HepG2 (cell line): ENCODE measurements at regions of chr14 and their contacts with region 1.

Region 1: DNA sequence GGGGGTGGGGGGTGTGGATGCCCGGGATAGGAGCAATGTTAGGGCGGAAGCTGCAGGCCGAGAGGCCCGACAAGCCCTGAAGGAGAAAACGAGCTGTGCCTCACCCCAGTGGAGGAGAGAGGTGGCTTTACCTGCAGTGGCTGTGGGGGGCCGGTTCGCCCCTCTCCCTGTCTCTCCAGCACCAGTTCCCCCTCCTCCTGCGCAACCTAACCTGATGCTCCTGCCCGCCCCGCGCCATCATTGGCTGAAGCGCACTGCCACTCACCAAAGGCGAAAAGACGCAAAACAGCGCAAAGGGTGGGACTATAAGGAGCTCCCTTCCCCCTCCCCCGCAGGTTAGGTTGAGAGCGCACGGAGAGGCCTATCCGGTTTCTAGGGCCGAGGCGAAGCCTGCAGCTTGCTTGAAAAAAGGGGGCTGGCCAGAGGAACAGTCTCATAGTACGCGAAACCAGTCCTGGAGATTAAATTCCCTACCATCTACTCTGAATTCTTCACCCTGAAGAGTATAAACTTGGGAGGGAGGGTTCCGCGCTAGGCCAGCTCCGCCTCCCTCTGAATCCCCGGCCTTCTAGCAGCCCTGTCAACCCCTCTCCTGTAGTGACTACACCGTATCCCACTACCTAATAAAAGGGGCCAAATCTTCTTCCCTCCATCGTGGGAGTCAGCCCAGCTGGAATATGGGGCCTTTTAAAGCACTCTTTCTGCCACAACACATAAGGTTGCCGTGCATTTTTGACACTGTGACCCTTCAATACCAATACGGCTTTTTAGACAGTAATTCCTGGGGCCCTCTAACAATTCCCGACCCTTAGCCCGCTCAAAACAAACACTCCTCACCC is 18.6 kb downstream of the CHD8 start:
- DNase-seq: peak; percentile 100
- ATAC-seq: peak; percentile 97
- H3K4me3 ChIP-seq: peak overlapping the region; percentile 85 to 96 (median 87)
- H3K27ac ChIP-seq: peak overlapping the region; percentile 92
- H3K4me1 ChIP-seq: peaks cover 46% of the 10 kb centered on the region
- H3K27me3 ChIP-seq: peaks cover 0 to 4% of the 10 kb centered on the region in 2 experiments; a peak in 1 of 5 replicates
- CTCF ChIP-seq: no peak; the same call in 1 of the 2 replicates
- EP300 ChIP-seq: 0 out of 4 replicates have a peak, but pooled peaks of 1 of the 2 experiments have one; percentile 30
- POLR2A ChIP-seq: peak; percentile 71 to 79
- RAD21 ChIP-seq: peak; percentile 61

Region 2: GRCh38 chr14:21121106-21121505 is 316.2 kb before region 1 on chr14:
- CTCF ChIA-PET with region 1: no interaction called
- POLR2A ChIA-PET with region 1: no interaction called
- in situ Hi-C with region 1: no loop called
- intact Hi-C with region 1: no loop called
- DNase-seq: no peak
- ATAC-seq: no peak
- H3K4me3 ChIP-seq: no peak overlapping the region
- H3K27ac ChIP-seq: no peak overlapping the region
- H3K4me1 ChIP-seq: peaks cover 12% of the 10 kb centered on the region; the same call in 1 of the 2 replicates
- H3K27me3 ChIP-seq: no peaks in the 10 kb centered on the region
- CTCF ChIP-seq: no peak
- EP300 ChIP-seq: no peak
- POLR2A ChIP-seq: no peak
- RAD21 ChIP-seq: no peak

Region 3: GRCh38 chr14:21300892-21301291 is 136.4 kb before region 1 on chr14:
- CTCF ChIA-PET with region 1: no interaction called
- POLR2A ChIA-PET with region 1: no interaction called
- in situ Hi-C with region 1: no loop called
- intact Hi-C with region 1: no loop called
- DNase-seq: no peak
- ATAC-seq: peak; percentile 52
- H3K4me3 ChIP-seq: peak overlapping the region; percentile 42 to 68 (median 46)
- H3K27ac ChIP-seq: no peak overlapping the region
- H3K4me1 ChIP-seq: peaks cover 52% of the 10 kb centered on the region
- H3K27me3 ChIP-seq: no peaks in the 10 kb centered on the region
- CTCF ChIP-seq: peak; percentile 64
- EP300 ChIP-seq: no peak
- POLR2A ChIP-seq: no peak
- RAD21 ChIP-seq: 0 out of 2 replicates have a peak, but pooled peaks have one; percentile 41

Region 4: DNA sequence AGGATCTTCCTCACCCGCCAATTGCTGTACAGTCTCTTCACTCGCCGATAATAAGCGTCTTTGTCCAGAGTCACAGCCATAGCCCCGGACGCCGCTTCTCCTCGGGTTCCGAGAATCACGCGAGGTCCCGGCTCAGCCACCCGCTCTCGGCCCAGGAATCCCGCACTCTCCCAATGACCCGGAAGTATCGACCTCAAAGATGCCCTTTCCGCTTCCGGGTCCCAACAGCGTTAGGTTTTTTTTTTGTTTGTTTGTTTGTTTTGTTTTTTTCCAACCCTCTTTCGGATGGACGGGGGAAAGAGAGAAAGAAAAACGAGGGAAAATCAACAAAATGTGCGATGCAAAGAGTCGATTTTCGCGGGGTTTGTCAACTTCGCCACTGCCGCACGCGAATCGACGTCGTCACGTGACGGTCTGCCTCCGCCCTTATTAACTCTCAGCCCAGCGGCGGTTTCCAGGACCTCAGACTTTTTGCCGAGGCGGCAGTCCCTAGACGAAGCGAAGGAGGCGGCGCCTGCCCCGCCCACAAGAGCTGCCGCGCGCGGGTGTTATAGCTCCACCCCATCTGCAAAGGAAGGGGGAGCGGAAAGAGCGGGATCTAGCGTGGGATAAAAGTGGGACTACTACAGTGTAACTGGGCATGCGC is 53.3 kb before region 1 on chr14 and contains the start of gene SUPT16H:
- CTCF ChIA-PET with region 1: no interaction called
- POLR2A ChIA-PET with region 1: interaction called, 20 read pairs
- in situ Hi-C with region 1: no loop called
- intact Hi-C with region 1: loop called (anchors 2 kb)
- DNase-seq: peak; percentile 94
- ATAC-seq: peak; percentile 91
- H3K4me3 ChIP-seq: peak within 1 kb of the TSS; percentile 74 to 97 (median 90)
- H3K27ac ChIP-seq: peak within 1 kb of the TSS; percentile 92
- H3K4me1 ChIP-seq: peaks cover 43% of the 10 kb centered on the region
- H3K27me3 ChIP-seq: no peaks in the 10 kb centered on the region; a peak in 1 of 5 replicates
- CTCF ChIP-seq: peak; percentile 11; the same call in 1 of the 2 replicates
- EP300 ChIP-seq: peak in 1 of 2 experiments; percentile 25; a peak in 2 of 4 replicates
- POLR2A ChIP-seq: peak; percentile 80 to 92
- RAD21 ChIP-seq: peak; percentile 46; the same call in 1 of the 2 replicates
- total RNA-seq, gene SUPT16H: 230 and 340 TPM in 2 replicates

Region 5: DNA sequence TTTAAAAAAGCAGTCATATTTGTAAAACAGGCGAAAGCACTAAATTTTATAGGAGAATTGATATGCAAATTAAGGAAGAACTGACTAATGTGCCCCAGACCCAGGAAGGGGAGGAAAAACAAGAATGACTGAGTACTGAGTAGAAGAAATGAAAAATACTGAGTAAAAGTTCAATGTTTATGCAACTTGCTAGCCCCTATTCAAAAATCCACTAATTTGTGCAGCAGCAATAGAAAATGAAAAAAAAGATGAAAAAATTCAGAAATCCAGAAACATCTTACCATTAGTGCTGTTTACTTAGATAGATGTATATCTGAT is 12.6 kb after region 1 on chr14:
- CTCF ChIA-PET with region 1: no interaction called
- POLR2A ChIA-PET with region 1: interaction called, 211 read pairs
- in situ Hi-C with region 1: no loop called
- intact Hi-C with region 1: no loop called
- DNase-seq: no peak
- ATAC-seq: no peak
- H3K4me3 ChIP-seq: no peak overlapping the region
- H3K27ac ChIP-seq: no peak overlapping the region
- H3K4me1 ChIP-seq: peaks cover 51% of the 10 kb centered on the region
- H3K27me3 ChIP-seq: no peaks in the 10 kb centered on the region
- CTCF ChIP-seq: no peak
- EP300 ChIP-seq: no peak
- POLR2A ChIP-seq: no peak
- RAD21 ChIP-seq: no peak

Region 6: GRCh38 chr14:21510735-21511657 is 73.7 kb after region 1 on chr14 and contains the start of gene METTL3:
- CTCF ChIA-PET with region 1: no interaction called
- POLR2A ChIA-PET with region 1: interaction called, 23 read pairs
- in situ Hi-C with region 1: no loop called
- intact Hi-C with region 1: no loop called
- DNase-seq: peak; percentile 100
- ATAC-seq: peak; percentile 97
- H3K4me3 ChIP-seq: peak within 1 kb of the TSS; percentile 84 to 97 (median 87)
- H3K27ac ChIP-seq: peak within 1 kb of the TSS; percentile 80
- H3K4me1 ChIP-seq: peaks cover 53% of the 10 kb centered on the region
- H3K27me3 ChIP-seq: no peaks in the 10 kb centered on the region; a peak in 1 of 5 replicates
- CTCF ChIP-seq: peak; percentile 53
- EP300 ChIP-seq: 0 out of 4 replicates have a peak, but pooled peaks of 1 of the 2 experiments have one; percentile 1
- POLR2A ChIP-seq: peak; percentile 97
- RAD21 ChIP-seq: peak; percentile 10; the same call in 1 of the 2 replicates
- total RNA-seq, gene METTL3: 114 and 123 TPM in 2 replicates

Region 7: GRCh38 chr14:21575661-21576060 is 138.4 kb after region 1 on chr14:
- CTCF ChIA-PET with region 1: no interaction called
- POLR2A ChIA-PET with region 1: no interaction called
- in situ Hi-C with region 1: no loop called
- intact Hi-C with region 1: no loop called
- DNase-seq: no peak
- ATAC-seq: no peak; the same call in 2 of the 3 replicates
- H3K4me3 ChIP-seq: no peak overlapping the region
- H3K27ac ChIP-seq: no peak overlapping the region
- H3K4me1 ChIP-seq: no peaks in the 10 kb centered on the region
- H3K27me3 ChIP-seq: peaks cover 0 to 7% of the 10 kb centered on the region in 2 experiments; a peak in 1 of 5 replicates
- CTCF ChIP-seq: no peak
- EP300 ChIP-seq: no peak
- POLR2A ChIP-seq: no peak
- RAD21 ChIP-seq: no peak